ENCODE measurements at regions of chr1 and their contacts with region 1.

Region 1: GRCh38 chr1:112395821-112396652 is at the start of gene CTTNBP2NL:
- DNase-seq: peak; percentile 97
- H3K4me3 Mint-ChIP-seq: peak within 1 kb of the TSS; percentile 98
- H3K27ac Mint-ChIP-seq: peak within 1 kb of the TSS; percentile 98
- H3K4me1 Mint-ChIP-seq: peaks cover 53% of the 10 kb centered on the region
- H3K27me3 Mint-ChIP-seq: no peaks in the 10 kb centered on the region
- CTCF ChIP-seq: no peak
- total RNA-seq, gene CTTNBP2NL: 41.3 and 48.8 TPM in 2 replicates

Region 2: GRCh38 chr1:112344754-112345423 is 51.1 kb before region 1 on chr1:
- CTCF ChIA-PET with region 1: no interaction called
- POLR2A ChIA-PET with region 1: no interaction called
- intact Hi-C with region 1: no loop called
- DNase-seq: no peak
- H3K4me3 Mint-ChIP-seq: no peak overlapping the region
- H3K27ac Mint-ChIP-seq: no peak overlapping the region
- H3K4me1 Mint-ChIP-seq: no peaks in the 10 kb centered on the region
- H3K27me3 Mint-ChIP-seq: peaks cover 30% of the 10 kb centered on the region
- CTCF ChIP-seq: no peak

Region 3: DNA sequence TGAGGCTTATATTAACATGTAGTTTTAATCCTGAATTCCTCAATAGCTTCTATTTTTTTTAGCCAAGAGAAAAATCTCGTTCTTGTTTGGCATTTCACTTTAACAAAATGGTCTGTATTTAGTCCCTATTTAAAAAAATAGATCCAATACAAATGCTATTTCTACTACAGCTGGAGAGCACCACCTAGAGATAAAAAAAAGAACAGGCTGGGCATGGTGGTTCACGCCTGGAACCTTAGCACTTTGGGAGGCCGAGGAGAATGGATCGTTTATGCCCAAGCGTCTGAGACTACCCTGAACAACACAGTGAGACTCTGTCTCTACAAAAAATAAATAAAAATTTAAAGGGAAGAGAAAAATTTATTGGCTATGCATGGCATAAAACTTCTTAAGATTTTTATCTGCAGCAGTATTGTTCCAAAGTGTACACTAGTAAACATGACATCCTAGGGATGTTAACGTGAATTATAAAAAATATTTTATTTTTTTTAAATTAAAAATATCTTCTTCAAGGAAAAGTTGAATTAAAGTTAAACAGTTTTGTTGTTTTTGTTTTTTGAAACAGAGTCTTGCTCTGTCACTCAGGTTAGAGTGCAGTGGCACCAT is 218.5 kb after region 1 on chr1:
- CTCF ChIA-PET with region 1: interaction called, 19 read pairs
- POLR2A ChIA-PET with region 1: interaction called, 57 read pairs
- intact Hi-C with region 1: loop called (anchors 1 kb)
- DNase-seq: peak; percentile 49
- H3K4me3 Mint-ChIP-seq: no peak overlapping the region
- H3K27ac Mint-ChIP-seq: no peak overlapping the region
- H3K4me1 Mint-ChIP-seq: peaks cover 6% of the 10 kb centered on the region
- H3K27me3 Mint-ChIP-seq: no peaks in the 10 kb centered on the region
- CTCF ChIP-seq: peak; percentile 55

Measured in MCF 10A (cell line).